ENCODE measurements at regions of chr2 and their contacts with region 1.

Region 1: DNA sequence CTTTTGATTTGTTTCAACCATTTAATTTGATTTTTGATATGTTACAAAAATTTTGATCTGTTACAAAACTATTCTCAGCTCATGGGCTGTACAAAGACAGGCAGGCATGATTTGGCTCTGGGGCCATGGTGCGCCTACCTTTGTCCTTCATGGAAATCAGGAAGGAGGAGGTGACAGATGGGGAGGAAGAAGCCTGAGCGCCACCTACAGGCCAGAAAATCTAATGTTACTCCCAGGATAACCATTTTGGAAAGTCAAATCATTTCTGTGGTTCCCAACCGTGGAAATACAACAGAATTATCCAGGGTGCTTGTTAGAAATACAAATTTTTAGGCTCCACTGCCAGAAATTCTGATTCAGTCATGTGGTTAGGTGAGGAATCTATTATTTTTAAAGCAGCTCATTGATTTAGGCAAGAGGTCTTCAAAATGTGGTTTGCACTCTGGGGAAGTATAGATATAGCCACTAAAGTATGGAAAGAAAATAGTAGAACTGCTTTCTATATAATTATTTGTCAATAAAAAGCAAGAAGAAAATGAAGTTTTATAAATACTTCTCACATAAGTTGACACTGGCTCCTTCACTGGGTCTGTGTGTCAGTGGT is 93.9 kb downstream of the EVA1A start:
- DNase-seq: peak; percentile 15
- ATAC-seq: no peak
- H3K4me3 ChIP-seq: no peak overlapping the region
- H3K27ac ChIP-seq: no peak overlapping the region
- H3K4me1 ChIP-seq: no peaks in the 10 kb centered on the region
- H3K27me3 ChIP-seq: peaks cover 19% of the 10 kb centered on the region
- CTCF ChIP-seq: peak; percentile 53
- POLR2A ChIP-seq: no peak
- RAD21 ChIP-seq: peak; percentile 38; the same call in 1 of the 2 replicates

Region 2: DNA sequence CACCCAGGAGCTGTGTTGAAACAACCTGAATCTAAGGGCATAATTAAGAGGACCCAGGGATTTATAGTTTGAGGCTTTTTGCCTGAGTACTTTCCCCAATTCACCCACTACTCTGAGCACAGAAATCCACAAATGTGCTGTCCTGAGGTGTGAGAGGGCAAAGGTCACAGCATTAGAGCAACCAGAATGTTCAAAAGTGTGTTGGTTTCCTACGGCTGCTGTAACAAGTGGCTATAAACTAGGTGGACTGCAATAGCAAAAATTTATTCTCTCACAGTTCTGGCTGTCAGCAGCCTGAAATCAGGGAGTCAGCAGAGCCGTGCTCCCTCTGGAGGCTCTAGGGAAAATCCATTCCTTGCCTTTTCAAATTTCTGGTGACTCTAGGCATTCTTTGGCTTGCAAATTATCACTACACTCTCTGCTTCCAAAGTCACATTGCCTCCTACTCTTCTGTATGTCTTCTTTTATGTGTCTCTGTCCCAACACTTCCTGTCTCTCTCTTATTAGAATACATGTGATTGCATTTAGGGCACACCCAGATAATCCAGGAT is 176.1 kb before region 1 on chr2:
- CTCF ChIA-PET with region 1: no interaction called
- POLR2A ChIA-PET with region 1: no interaction called
- dilution Hi-C with region 1: no loop called
- in situ Hi-C with region 1: no loop called
- intact Hi-C with region 1: no loop called
- DNase-seq: peak; percentile 45
- ATAC-seq: peak; percentile 79
- H3K4me3 ChIP-seq: no peak overlapping the region
- H3K27ac ChIP-seq: no peak overlapping the region
- H3K4me1 ChIP-seq: peaks cover 8% of the 10 kb centered on the region; the same call in 1 of the 2 replicates
- H3K27me3 ChIP-seq: no peaks in the 10 kb centered on the region
- CTCF ChIP-seq: peak; percentile 51
- POLR2A ChIP-seq: no peak
- RAD21 ChIP-seq: peak; percentile 54

Region 3: GRCh38 chr2:75416420-75417342 is 50.1 kb before region 1 on chr2:
- CTCF ChIA-PET with region 1: no interaction called
- POLR2A ChIA-PET with region 1: no interaction called
- dilution Hi-C with region 1: no loop called
- in situ Hi-C with region 1: no loop called
- intact Hi-C with region 1: loop called (anchors 5 kb)
- DNase-seq: no peak
- ATAC-seq: no peak
- H3K4me3 ChIP-seq: no peak overlapping the region
- H3K27ac ChIP-seq: no peak overlapping the region
- H3K4me1 ChIP-seq: no peaks in the 10 kb centered on the region
- H3K27me3 ChIP-seq: peaks cover 40% of the 10 kb centered on the region
- CTCF ChIP-seq: no peak
- POLR2A ChIP-seq: no peak
- RAD21 ChIP-seq: no peak

Region 4: GRCh38 chr2:75523313-75524275 is 56.8 kb after region 1 on chr2:
- CTCF ChIA-PET with region 1: no interaction called
- POLR2A ChIA-PET with region 1: no interaction called
- dilution Hi-C with region 1: no loop called
- in situ Hi-C with region 1: no loop called
- intact Hi-C with region 1: no loop called
- DNase-seq: peak; percentile 89
- ATAC-seq: peak; percentile 79
- H3K4me3 ChIP-seq: no peak overlapping the region
- H3K27ac ChIP-seq: no peak overlapping the region
- H3K4me1 ChIP-seq: peaks cover 15% of the 10 kb centered on the region
- H3K27me3 ChIP-seq: no peaks in the 10 kb centered on the region
- CTCF ChIP-seq: no peak
- POLR2A ChIP-seq: no peak
- RAD21 ChIP-seq: no peak

Region 5: DNA sequence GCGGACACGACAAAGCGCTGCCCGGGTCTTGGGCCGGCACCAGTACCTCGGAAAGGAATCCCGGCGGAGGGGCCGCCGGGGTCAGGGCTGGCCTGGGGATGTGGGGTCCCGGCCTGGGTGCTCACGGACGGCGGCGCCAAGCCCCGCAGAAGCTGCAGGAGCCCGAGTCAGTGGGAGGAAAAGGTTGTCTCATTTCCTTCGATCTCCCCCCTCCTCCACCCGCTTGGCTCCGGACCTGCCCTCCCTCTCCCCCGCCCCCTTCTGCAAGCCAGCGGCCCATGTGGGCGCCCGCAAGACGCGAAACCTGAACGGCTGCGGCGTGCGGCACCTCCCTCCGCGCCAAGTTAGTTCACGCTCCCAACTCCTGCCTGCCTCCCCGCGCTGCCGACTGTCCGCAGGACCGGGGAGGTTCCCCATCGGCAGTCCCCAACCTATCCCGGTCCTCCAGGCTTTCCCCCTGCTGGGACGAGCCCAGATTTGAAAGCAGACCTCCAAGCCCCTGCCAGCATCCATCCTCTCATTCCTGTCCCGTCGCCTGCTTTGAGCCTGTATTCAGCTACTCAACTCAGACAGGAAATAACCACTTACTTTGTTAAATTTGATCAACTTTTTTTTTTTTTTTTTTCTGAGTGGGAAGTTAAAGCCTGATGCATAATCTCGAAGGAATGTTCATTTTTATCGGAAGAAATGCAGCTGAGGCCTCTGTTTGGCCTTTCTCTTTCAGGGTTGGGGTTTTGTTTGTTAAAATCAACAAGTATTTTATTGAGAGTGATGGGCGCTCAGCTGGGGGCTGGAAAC is 94.2 kb after region 1 on chr2 and contains the start of gene EVA1A:
- CTCF ChIA-PET with region 1: interaction called, 4 read pairs
- POLR2A ChIA-PET with region 1: no interaction called
- dilution Hi-C with region 1: no loop called
- in situ Hi-C with region 1: no loop called
- intact Hi-C with region 1: loop called (anchors 2 kb)
- DNase-seq: peak; percentile 81
- ATAC-seq: peak; percentile 75
- H3K4me3 ChIP-seq: peak within 1 kb of the TSS; percentile 88
- H3K27ac ChIP-seq: peak within 1 kb of the TSS; percentile 99
- H3K4me1 ChIP-seq: peaks cover 13% of the 10 kb centered on the region
- H3K27me3 ChIP-seq: no peaks in the 10 kb centered on the region
- CTCF ChIP-seq: no peak
- POLR2A ChIP-seq: peak; percentile 72
- RAD21 ChIP-seq: peak; percentile 2; the same call in 1 of the 2 replicates
- total RNA-seq, gene EVA1A: 89.2 and 93.7 TPM in 2 replicates

Region 6: GRCh38 chr2:75608684-75609333 is 142.0 kb after region 1 on chr2:
- CTCF ChIA-PET with region 1: interaction called, 36 read pairs
- POLR2A ChIA-PET with region 1: no interaction called
- dilution Hi-C with region 1: no loop called
- in situ Hi-C with region 1: loop called (anchors 5 kb)
- intact Hi-C with region 1: loop called (anchors 1 kb)
- DNase-seq: peak; percentile 47
- ATAC-seq: peak; percentile 67
- H3K4me3 ChIP-seq: peak overlapping the region; percentile 22; the same call in 1 of the 2 replicates
- H3K27ac ChIP-seq: no peak overlapping the region
- H3K4me1 ChIP-seq: peaks cover 13% of the 10 kb centered on the region
- H3K27me3 ChIP-seq: peaks cover 24% of the 10 kb centered on the region
- CTCF ChIP-seq: peak; percentile 89
- POLR2A ChIP-seq: peak; percentile 34; the same call in 1 of the 2 replicates
- RAD21 ChIP-seq: peak; percentile 95

Region 7: GRCh38 chr2:75627895-75628504 is 161.2 kb after region 1 on chr2:
- CTCF ChIA-PET with region 1: interaction called, 18 read pairs
- POLR2A ChIA-PET with region 1: no interaction called
- dilution Hi-C with region 1: loop called (anchors 25 kb)
- in situ Hi-C with region 1: no loop called
- intact Hi-C with region 1: loop called (anchors 1 kb)
- DNase-seq: peak; percentile 80
- ATAC-seq: peak; percentile 97
- H3K4me3 ChIP-seq: no peak overlapping the region
- H3K27ac ChIP-seq: no peak overlapping the region
- H3K4me1 ChIP-seq: no peaks in the 10 kb centered on the region
- H3K27me3 ChIP-seq: peaks cover 18% of the 10 kb centered on the region
- CTCF ChIP-seq: peak; percentile 90
- POLR2A ChIP-seq: no peak
- RAD21 ChIP-seq: peak; percentile 93

Region 8: DNA sequence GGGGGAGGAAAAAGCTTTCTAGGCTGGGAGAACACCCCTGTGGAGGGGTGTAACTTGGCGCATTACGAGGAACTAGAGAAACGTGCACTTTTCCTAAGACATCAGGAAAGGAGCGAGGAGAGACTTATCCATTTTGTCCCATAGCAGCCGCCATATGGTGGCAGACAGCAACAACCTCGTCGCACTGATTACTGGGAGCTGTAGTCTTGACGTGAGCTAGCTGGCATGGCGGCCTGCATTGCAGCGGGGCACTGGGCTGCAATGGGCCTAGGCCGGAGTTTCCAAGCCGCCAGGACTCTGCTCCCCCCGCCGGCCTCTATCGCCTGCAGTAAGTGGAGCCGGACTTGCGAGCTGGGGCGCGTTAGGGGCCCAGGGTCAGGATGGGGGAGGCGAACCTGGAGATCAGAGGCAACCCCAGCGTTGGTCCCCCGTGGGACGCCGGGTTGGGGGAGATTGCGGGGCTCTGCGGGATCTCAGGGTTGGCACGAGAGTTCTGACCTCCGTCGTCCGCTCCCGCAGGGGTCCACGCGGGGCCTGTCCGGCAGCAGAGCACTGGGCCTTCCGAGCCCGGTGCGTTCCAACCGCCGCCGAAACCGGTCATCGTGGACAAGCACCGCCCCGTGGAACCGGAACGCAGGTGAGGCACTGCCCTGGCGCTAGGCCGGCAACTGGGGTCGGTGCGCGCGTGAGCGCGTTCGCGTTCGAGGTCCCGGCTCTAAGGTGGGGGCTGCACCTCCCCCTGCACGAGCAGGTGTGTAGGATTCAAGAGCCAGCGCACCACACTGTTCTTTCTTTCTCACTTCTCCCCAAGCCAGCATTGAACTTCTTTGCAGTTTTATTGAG is 180.0 kb after region 1 on chr2 and contains the start of gene MRPL19:
- CTCF ChIA-PET with region 1: no interaction called
- POLR2A ChIA-PET with region 1: no interaction called
- dilution Hi-C with region 1: loop called (anchors 25 kb)
- in situ Hi-C with region 1: no loop called
- intact Hi-C with region 1: no loop called
- DNase-seq: peak; percentile 93
- ATAC-seq: peak; percentile 99
- H3K4me3 ChIP-seq: peak within 1 kb of the TSS; percentile 66
- H3K27ac ChIP-seq: peak within 1 kb of the TSS; percentile 67
- H3K4me1 ChIP-seq: no peaks in the 10 kb centered on the region
- H3K27me3 ChIP-seq: no peaks in the 10 kb centered on the region
- CTCF ChIP-seq: no peak
- POLR2A ChIP-seq: peak; percentile 33; the same call in 1 of the 2 replicates
- RAD21 ChIP-seq: no peak
- total RNA-seq, gene MRPL19: 28.5 and 48.0 TPM in 2 replicates

Measured in IMR-90 (cell line).